Left colon (tissue), 2 donors: ENCODE measurements at regions of chr16 and their contacts with region 1.

Region 1: GRCh38 chr16:10277597-10277996 is 95.4 kb upstream of the GRIN2A start:
- DNase-seq: no peak
- ATAC-seq: no peak

Region 2: GRCh38 chr16:9929313-9929712 is 348.3 kb before region 1 on chr16:
- intact Hi-C with region 1: no loop called
- DNase-seq: no peak
- ATAC-seq: no peak

Region 3: GRCh38 chr16:10338426-10338825 is 60.8 kb after region 1 on chr16:
- intact Hi-C with region 1: loop called in 1 of 2 experiments (anchors 10 kb)
- DNase-seq: no peak
- ATAC-seq: no peak